ENCODE measurements at regions of chr17 and their contacts with region 1.

Region 1: DNA sequence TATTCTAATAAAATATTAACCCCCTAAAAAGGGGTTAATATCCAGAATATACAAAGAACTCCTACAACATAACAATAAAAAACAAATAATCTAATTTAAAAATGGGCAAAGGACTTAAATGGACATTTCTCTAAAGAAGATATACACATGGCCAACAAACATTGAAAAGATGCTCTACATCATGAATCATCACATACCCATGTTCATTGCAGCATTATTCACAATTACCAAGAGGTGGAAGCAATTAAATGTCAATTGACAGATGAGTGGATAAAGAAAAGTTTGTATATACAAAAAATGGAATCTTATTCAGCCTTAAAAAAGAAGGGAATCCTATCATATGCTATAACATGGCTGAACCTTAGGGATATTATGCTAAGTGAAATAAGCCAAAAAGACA is 36.8 kb downstream of the CPD start:
- DNase-seq: no peak
- ATAC-seq: no peak
- H3K4me3 ChIP-seq: no peak overlapping the region
- H3K27ac ChIP-seq: no peak overlapping the region
- H3K4me1 ChIP-seq: peaks cover 28% of the 10 kb centered on the region
- H3K27me3 ChIP-seq: no peaks in the 10 kb centered on the region
- CTCF ChIP-seq: no peak
- EP300 ChIP-seq: no peak
- POLR2A ChIP-seq: no peak
- RAD21 ChIP-seq: no peak

Region 2: DNA sequence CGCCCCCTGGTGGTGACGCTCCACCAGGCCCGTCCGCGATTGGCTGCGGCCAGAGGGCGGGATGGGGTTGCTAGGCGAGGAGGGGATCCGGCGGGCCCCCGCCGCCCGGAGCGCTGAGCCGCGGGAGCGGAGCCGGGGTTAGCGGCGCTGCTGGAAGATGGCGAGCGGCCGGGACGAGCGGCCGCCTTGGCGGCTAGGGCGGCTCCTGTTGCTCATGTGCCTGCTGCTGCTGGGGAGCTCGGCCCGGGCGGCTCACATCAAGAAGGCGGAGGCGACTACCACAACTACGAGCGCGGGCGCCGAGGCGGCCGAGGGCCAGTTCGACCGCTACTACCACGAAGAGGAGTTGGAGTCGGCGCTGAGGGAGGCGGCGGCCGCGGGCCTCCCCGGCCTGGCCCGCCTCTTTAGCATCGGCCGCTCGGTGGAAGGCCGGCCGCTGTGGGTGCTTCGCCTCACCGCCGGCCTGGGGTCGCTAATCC is 36.6 kb before region 1 on chr17 and contains the start of gene CPD:
- CTCF ChIA-PET with region 1: no interaction called
- POLR2A ChIA-PET with region 1: no interaction called
- in situ Hi-C with region 1: no loop called
- intact Hi-C with region 1: loop called (anchors 5 kb)
- DNase-seq: peak; percentile 83
- ATAC-seq: peak; percentile 93
- H3K4me3 ChIP-seq: peak within 1 kb of the TSS; percentile 92 to 94 (median 92)
- H3K27ac ChIP-seq: peak within 1 kb of the TSS; percentile 68
- H3K4me1 ChIP-seq: peaks cover 65% of the 10 kb centered on the region
- H3K27me3 ChIP-seq: no peaks in the 10 kb centered on the region; a peak in 1 of 5 replicates
- CTCF ChIP-seq: no peak
- EP300 ChIP-seq: no peak
- POLR2A ChIP-seq: peak; percentile 81 to 84
- RAD21 ChIP-seq: peak; percentile 52
- total RNA-seq, gene CPD: 54.3 and 72.3 TPM in 2 replicates